ENCODE measurements at regions of chr1 and their contacts with region 1.

Region 1: DNA sequence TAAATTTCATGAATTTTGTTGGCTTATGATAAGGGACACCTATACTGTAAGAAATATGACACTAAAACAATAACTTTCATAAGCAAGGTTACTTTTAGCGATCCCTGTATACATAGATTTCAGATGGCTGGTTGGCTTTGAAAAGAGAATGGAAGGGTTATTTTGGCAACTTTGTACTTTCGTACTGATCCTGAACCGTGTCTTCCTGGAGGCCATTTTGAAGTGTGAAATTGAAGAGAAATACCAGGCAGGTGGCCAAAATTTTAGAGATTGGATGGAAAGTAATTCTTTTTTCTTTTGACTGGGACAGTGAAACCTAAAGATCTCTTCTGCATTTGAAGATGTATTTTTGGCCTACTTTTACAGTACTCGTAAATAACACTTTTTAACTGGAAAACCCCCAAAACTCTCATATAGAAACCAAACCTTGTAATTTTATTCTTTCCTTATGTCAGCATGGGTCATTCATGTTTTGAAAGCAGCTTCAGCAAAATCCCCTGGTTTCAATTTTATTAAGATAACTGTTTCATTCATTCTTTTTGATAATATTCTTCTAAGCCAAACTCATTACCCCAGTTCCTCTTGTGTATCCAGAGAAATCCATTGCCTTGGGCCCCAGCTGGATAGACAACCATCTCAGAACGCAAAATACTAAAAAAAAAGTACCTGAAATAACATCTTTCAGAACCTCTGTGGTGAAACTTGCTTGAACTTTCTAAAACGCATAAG is 38.4 kb upstream of the ZNF281 start:
- DNase-seq: peak; percentile 81
- ATAC-seq: peak; percentile 91
- H3K4me3 ChIP-seq: no peak overlapping the region; the same call in 1 of the 2 replicates
- H3K27ac ChIP-seq: peak overlapping the region; percentile 92
- H3K4me1 ChIP-seq: peaks cover 16% of the 10 kb centered on the region; the same call in 1 of the 2 replicates
- H3K27me3 ChIP-seq: no peaks in the 10 kb centered on the region
- CTCF ChIP-seq: no peak
- EP300 ChIP-seq: peak; percentile 94 to 97
- POLR2A ChIP-seq: no peak
- RAD21 ChIP-seq: peak; percentile 4; the same call in 1 of the 2 replicates

Region 2: DNA sequence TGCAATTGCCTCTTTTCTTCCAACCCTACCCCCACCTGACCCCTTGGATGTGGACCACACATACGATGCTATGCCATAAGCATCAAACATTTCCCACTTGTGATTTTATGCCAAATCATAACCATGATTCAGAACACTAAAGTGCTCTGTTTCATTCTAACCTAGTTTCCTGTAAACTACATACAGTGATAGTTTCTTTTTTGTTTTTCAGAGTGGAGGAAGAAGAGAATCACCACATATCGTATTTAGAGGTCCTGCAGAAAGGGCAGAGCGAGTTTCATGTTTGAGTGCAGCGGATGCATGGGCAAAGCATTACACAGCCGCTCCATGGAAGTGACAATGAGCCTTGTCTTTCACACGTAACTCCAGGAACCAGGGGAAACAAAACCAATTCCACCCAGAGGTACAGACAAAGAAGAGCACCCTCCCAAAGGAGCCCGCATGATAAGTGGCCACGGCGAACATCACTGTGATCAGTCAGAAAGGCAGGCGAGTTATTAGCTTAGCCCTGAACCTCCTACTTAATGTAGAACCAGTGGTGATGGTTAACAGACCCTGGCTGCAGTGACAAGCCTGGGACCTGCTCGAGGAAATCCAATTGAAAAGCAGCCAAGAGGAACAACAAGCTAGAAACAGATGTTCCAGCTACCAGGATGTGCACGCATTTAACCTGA is 25.6 kb after region 1 on chr1:
- CTCF ChIA-PET with region 1: interaction called, 5 read pairs
- POLR2A ChIA-PET with region 1: interaction called, 6 read pairs
- RAD21 ChIA-PET with region 1: interaction called, 6 read pairs
- SMC1A ChIA-PET with region 1: interaction called, 5 read pairs
- in situ Hi-C with region 1: no loop called
- intact Hi-C with region 1: loop called (anchors 1 kb)
- DNase-seq: peak; percentile 57
- ATAC-seq: peak; percentile 69
- H3K4me3 ChIP-seq: peak overlapping the region; percentile 43
- H3K27ac ChIP-seq: peak overlapping the region; percentile 78
- H3K4me1 ChIP-seq: peaks cover 36% of the 10 kb centered on the region
- H3K27me3 ChIP-seq: no peaks in the 10 kb centered on the region
- CTCF ChIP-seq: no peak
- EP300 ChIP-seq: peak in 1 of 2 experiments; percentile 29; a peak in 1 of 4 replicates
- POLR2A ChIP-seq: peak; percentile 28; the same call in 1 of the 2 replicates
- RAD21 ChIP-seq: no peak

Measured in GM12878 (cell line).